Right ventricle myocardium superior (tissue), 1 donor: ENCODE measurements at regions of chr6 and their contacts with region 1.

Region 1: DNA sequence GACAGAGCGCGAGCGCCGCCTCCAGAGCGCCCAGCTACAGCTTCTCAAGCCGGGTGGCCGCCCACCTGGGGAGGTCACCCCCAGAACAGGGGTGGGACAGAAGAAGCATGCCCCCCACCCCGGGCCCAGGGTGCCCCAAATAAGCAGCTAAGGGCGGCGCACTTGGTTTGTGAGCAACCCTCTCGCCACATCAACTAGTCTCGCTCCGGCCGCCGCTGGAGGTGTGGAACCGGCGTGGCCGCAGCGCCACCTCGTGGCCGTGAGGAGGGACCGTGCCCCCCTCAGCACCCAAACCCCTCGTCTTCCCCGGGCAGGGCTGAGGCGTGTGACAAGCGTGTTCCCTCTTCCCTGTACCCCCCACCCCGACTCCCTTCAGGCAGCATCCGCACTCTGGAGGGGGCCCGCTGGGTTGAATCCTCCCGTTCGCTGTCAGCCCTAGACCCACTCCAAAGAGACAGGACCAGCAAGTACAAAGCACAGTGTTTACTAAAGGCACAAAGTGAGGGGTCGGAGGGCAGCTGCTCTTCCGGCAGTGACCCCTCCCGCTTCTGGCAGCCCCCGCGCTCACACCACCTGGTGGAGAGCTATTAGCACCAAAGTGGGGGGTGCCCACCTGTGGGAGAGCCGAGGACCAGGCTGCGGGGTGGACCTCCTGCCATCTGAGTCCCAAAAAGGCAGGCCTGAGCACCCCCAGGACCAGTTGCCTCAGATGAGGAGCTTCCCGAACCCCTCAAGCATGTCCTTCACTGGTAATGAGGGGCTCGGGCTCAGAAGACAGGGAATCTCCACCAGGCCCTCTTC is 45.4 kb downstream of the MDFI start:
- DNase-seq: peak; percentile 91
- ATAC-seq: peak; percentile 90

Region 2: DNA sequence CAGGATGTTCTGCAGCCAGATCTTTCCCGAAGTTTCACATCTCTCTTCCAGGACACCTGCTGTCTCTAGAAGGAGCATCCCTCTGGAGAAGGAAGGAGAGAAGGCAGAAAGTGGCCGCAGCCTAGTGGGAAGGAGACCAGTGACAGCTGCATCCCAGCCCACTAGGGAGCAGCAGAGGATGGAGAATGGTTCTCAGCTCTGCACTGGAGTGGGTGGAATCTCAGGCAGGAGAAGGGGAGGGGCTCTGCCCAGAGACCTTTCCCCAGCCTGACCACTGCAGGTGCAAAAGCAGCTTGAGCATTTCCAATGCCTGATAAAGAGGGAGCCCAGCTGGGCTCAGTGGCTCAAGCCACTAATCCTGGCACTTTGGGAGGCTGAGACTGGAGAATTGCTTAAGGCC is 316.0 kb before region 1 on chr6:
- intact Hi-C with region 1: loop called (anchors 2 kb)
- DNase-seq: no peak
- ATAC-seq: peak; percentile 77

Region 3: GRCh38 chr6:41463062-41463930 is 220.4 kb before region 1 on chr6:
- intact Hi-C with region 1: loop called (anchors 10 kb)
- DNase-seq: peak; percentile 83
- ATAC-seq: peak; percentile 97

Region 4: DNA sequence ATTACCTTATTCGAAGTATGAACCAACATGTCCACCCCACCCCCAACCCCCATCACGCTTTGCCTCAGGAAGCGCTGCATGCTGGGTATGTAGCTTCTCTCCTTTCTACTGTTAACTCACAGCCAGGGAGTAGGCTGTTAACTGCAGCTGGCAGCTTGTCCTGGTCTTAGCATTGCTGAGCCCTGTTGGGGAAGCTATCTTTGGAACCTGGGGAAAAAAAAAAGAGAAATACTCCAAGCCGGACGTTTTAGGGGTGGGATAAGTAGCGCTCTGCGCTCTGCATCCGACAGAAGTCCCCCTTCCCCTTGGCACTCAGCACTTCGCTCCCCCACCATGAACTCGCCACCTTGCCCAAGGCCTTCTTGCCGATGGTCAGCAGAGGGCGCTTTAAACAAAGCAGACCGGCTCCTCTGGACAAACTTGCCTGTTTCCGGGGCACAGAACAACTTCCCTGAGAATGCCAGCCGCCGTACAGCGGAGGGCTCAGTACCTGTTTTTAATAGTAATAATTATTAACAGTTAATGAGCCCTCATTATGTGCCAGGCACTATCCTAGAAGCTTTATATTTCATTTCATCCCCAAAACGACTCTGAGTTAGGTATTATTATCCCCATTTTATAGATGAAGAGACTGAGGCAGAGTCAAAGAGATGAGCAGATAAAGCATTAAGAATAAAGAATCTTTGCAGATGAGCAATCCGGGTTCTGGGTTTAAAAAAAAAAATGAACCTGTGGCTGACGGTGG is 80.7 kb before region 1 on chr6:
- intact Hi-C with region 1: loop called (anchors 2 kb)
- DNase-seq: peak; percentile 81
- ATAC-seq: peak; percentile 89